ENCODE measurements at regions of chr12 and their contacts with region 1.

Region 1: DNA sequence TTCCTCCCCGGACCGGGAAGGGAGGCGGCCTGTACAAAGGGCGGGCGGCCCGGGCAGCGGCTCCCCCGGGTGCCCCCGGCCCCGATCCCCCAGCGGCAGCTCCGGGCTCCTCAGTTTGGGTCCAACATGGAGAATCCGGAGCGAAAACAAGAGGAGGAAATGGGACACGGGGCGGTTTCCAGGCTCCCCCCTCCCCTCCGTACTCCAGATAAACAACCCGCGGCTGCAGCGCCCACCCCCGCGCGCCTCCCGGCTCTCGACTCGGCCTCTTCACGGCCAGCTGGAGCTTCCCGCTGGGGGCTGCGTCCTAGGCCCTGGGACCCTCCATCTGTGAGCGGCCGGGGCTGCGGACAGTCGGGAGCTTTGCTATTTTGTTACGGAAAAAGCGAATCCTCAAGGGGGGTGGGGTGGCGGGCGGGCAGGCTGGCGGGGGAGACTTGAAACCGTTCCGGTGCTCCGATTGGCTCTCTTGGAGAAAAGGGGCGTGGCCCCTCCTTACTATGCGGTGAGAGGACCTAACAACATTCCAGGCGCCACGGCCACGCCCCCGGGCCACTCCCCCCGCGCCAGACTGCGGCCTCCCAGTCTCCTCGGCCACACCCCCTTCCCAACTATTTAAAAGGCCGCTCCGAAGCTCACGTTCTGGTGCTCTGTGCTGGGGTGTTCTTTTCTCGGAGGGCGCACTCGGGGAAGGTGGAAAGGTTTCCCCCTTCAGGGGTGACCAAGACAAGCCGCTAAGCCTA is at the start of gene CTDSP2:
- DNase-seq: peak; percentile 77 to 90 (median 79)
- H3K4me3 ChIP-seq: peak within 1 kb of the TSS; percentile 84 to 87
- H3K4me3 Mint-ChIP-seq: peak within 1 kb of the TSS; percentile 84 to 96 (median 89)
- H3K27ac ChIP-seq: peak within 1 kb of the TSS; percentile 74
- H3K27ac Mint-ChIP-seq: peak within 1 kb of the TSS; percentile 71 to 95 (median 88)
- H3K4me1 ChIP-seq: peaks cover 44% of the 10 kb centered on the region
- H3K4me1 Mint-ChIP-seq: peaks cover 35 to 62% (median 45%) of the 10 kb centered on the region in 4 donors
- H3K27me3 ChIP-seq: no peaks in the 10 kb centered on the region
- H3K27me3 Mint-ChIP-seq: peaks cover 5 to 8% of the 10 kb centered on the region in 2 donors
- total RNA-seq, gene CTDSP2: 274 to 285 TPM

Region 2: DNA sequence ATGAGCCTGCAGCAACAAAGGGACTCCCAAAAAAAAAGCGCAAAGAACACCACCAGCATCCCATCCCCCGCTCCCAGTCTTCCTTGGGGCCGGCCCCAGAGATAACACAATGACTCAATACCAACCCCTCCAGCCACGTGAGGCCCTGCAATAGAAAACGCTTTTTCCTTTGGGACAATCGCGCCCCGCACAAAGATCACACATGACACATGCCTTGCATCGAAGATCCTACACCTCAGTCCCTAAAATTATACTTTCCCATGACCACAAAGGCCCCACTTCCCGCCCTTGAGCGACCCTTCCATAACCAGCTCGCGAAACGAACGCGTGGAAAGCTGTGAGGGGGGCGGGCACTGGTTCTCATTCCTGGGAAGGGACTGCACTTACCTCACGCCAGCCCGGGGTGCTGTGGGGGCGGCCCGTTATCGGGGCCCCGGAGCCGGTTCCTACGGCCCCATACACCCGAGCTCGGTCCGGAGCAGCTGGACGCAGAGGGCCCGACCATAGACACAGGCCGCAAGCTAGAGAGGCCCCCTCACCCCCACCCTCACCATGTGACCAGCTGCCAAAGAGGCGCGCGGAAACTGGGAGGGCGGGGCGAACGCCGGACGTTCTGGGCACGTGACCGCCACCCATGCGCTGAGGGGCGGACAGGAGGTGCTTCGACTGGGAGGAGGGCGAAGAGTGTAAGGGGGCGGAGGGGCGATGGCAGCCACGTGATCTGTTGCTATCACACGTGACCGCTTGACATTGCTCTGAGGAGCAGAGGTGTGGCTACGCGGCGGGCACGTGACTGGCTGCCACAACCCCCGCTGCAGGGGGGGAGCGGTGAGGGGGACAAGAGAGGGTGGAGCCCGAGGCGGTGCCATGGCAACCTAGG is 94.7 kb before region 1 on chr12 and contains the start of gene CDK4:
- CTCF ChIA-PET with region 1: interaction called, 10 read pairs
- POLR2A ChIA-PET with region 1: interaction called, 19 read pairs
- intact Hi-C with region 1: loop called (anchors 5 kb)
- DNase-seq: peak; percentile 97 to 100 (median 99)
- H3K4me3 ChIP-seq: peak within 1 kb of the TSS; percentile 30 to 80
- H3K4me3 Mint-ChIP-seq: peak within 1 kb of the TSS; percentile 82 to 98 (median 90)
- H3K27ac ChIP-seq: peak within 1 kb of the TSS; percentile 82
- H3K27ac Mint-ChIP-seq: peak within 1 kb of the TSS; percentile 87 to 100 (median 99)
- H3K4me1 ChIP-seq: peaks cover 50% of the 10 kb centered on the region
- H3K4me1 Mint-ChIP-seq: peaks cover 46 to 58% (median 51%) of the 10 kb centered on the region in 4 donors
- H3K27me3 ChIP-seq: no peaks in the 10 kb centered on the region
- H3K27me3 Mint-ChIP-seq: no peaks in the 10 kb centered on the region
- total RNA-seq, gene CDK4: 44.4 to 48.3 TPM

Region 3: DNA sequence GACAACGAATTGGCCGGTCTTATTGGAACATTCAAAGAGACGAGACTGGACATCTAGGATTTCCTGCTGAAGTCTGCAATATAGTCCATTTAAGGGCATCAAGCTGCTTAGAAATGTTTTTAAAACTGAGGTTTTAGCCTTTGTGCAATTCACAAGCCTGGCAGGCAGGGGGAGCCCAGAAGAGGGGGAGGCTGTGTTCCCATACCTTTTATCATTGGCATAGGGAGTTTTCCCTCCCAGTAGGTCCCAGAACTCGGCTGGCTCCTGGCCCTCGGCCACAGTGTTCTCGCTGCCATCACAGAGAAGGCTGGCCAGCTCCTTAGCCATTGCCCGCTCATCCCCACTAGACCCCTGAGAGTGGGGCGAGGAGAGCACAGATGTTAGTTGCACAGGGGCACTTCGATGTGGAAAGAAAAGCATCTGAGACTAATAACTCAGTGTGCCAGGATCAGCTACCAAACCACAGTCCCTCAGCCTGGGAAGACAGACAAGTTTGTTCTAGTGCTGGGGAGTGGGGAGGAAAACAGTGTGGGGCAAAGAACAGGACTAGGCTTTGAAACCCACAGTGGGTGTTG is 43.3 kb before region 1 on chr12:
- CTCF ChIA-PET with region 1: interaction called, 11 read pairs
- POLR2A ChIA-PET with region 1: no interaction called
- intact Hi-C with region 1: no loop called
- DNase-seq: peak in 4 of 5 donors; percentile 13 to 31 (median 26)
- H3K4me3 ChIP-seq: no peak overlapping the region
- H3K4me3 Mint-ChIP-seq: no peak overlapping the region
- H3K27ac ChIP-seq: no peak overlapping the region
- H3K27ac Mint-ChIP-seq: peak overlapping the region in 4 of 7 donors; percentile 22 to 64 (median 33)
- H3K4me1 ChIP-seq: no peaks in the 10 kb centered on the region
- H3K4me1 Mint-ChIP-seq: no peaks in the 10 kb centered on the region
- H3K27me3 ChIP-seq: no peaks in the 10 kb centered on the region
- H3K27me3 Mint-ChIP-seq: no peaks in the 10 kb centered on the region

Region 4: DNA sequence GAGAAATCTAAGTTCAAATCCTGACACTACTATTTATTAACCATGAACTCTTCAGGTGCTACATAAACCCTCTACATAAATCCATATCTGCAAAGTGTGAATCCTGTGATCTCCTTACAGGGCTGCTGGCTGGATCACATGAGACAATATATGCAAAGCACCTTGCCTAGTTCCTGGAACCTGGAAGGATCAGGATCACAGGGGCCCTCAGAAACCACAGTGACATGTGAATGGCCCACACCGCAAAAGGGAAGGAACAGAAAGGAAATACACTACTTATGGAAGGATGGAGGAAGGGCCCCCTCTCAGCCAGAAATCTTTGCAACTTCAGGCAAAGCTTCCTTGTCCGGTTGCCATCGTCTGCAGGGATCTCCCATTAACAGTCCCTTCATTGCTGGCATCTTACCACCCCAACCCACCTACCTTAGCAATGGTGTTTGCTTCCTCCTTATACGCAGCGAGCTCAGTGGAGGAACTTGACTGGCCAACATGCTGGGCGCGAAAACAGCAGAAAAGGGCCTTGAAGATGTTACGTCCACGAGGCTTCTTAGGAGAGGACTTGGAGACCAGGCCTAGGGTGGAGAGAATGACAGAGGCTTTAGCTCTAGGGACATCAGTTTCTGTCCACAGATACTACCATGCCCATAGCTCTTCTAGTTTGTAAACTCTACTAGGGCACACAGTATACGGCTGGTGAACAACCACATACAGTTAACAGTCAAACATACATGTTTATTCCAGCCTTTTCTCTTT is 17.5 kb before region 1 on chr12:
- CTCF ChIA-PET with region 1: interaction called, 29 read pairs
- POLR2A ChIA-PET with region 1: interaction called, 32 read pairs
- intact Hi-C with region 1: loop called (anchors 1 kb)
- DNase-seq: no peak
- H3K4me3 ChIP-seq: no peak overlapping the region
- H3K4me3 Mint-ChIP-seq: peak overlapping the region in 1 of 8 donors; percentile 57
- H3K27ac ChIP-seq: no peak overlapping the region
- H3K27ac Mint-ChIP-seq: peak overlapping the region in 6 of 7 donors; percentile 17 to 82 (median 71)
- H3K4me1 ChIP-seq: peaks cover 54% of the 10 kb centered on the region
- H3K4me1 Mint-ChIP-seq: peaks cover 32 to 60% (median 44%) of the 10 kb centered on the region in 4 donors
- H3K27me3 ChIP-seq: no peaks in the 10 kb centered on the region
- H3K27me3 Mint-ChIP-seq: no peaks in the 10 kb centered on the region

Region 5: GRCh38 chr12:57865090-57865751 is 18.5 kb after region 1 on chr12:
- CTCF ChIA-PET with region 1: interaction called, 3 read pairs
- POLR2A ChIA-PET with region 1: interaction called, 20 read pairs
- intact Hi-C with region 1: loop called (anchors 1 kb)
- DNase-seq: peak; percentile 28 to 68 (median 31)
- H3K4me3 ChIP-seq: peak overlapping the region in 1 of 2 donors; percentile 51
- H3K4me3 Mint-ChIP-seq: peak overlapping the region; percentile 76 to 93 (median 86)
- H3K27ac ChIP-seq: no peak overlapping the region
- H3K27ac Mint-ChIP-seq: peak overlapping the region in 2 of 7 donors; percentile 8 to 64
- H3K4me1 ChIP-seq: peaks cover 12% of the 10 kb centered on the region
- H3K4me1 Mint-ChIP-seq: peaks cover 4 to 10% (median 7%) of the 10 kb centered on the region in 4 donors
- H3K27me3 ChIP-seq: no peaks in the 10 kb centered on the region
- H3K27me3 Mint-ChIP-seq: peaks cover 1 to 11% of the 10 kb centered on the region in 2 donors

Region 6: GRCh38 chr12:57899010-57899662 is 52.4 kb after region 1 on chr12:
- CTCF ChIA-PET with region 1: interaction called, 37 read pairs
- POLR2A ChIA-PET with region 1: interaction called, 113 read pairs
- intact Hi-C with region 1: loop called (anchors 1 kb)
- DNase-seq: peak; percentile 85 to 96 (median 86)
- H3K4me3 ChIP-seq: peak overlapping the region in 1 of 2 donors; percentile 22
- H3K4me3 Mint-ChIP-seq: peak overlapping the region; percentile 73 to 91 (median 84)
- H3K27ac ChIP-seq: peak overlapping the region; percentile 82
- H3K27ac Mint-ChIP-seq: peak overlapping the region; percentile 99 to 100 (median 100)
- H3K4me1 ChIP-seq: peaks cover 62% of the 10 kb centered on the region
- H3K4me1 Mint-ChIP-seq: peaks cover 50 to 56% (median 53%) of the 10 kb centered on the region in 4 donors
- H3K27me3 ChIP-seq: no peaks in the 10 kb centered on the region
- H3K27me3 Mint-ChIP-seq: no peaks in the 10 kb centered on the region